ENCODE measurements at regions of chr7 and their contacts with region 1.

Region 1: DNA sequence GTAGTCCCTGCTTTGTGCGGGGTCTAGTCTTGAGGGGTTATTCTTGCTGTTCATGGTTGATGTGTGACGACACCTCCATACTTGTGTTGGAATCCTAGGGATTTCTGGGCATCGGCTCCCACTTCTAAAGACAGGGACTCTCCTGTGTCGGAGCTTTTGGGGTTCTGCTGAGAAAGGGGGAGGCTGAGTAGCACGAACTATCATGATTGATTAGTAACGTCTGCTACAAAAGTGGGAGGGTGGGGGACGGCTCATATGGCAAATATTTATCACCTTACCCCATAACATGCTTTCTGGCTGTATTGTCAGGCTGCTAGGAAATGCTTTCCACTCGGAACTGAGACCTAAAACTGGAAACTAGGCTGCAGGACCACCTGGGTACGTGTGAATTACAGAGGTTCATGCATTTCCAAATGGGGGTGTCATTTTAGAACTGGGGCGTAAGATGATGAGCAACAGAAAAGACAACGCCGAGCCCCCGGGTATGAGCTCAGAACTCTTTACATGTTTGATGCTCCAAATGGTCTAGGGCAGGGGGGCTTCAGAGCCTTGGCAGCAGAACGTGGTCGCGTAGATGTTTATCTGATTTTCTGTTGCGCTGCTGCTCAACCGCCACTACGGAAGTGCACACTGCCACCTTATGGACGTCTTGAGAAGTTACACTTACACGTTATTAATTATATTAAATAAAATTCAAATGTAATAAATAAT is 15.1 kb upstream of the NME8 start:
- DNase-seq: peak; percentile 35 to 73 (median 68)
- H3K4me3 ChIP-seq: peak overlapping the region; percentile 36 to 73 (median 57)
- H3K4me3 Mint-ChIP-seq: peak overlapping the region; percentile 88 to 96
- H3K27ac ChIP-seq: no peak overlapping the region
- H3K27ac Mint-ChIP-seq: peak overlapping the region in 3 of 7 donors; percentile 13 to 52 (median 52)
- H3K4me1 ChIP-seq: peaks cover 15 to 19% of the 10 kb centered on the region in 2 donors
- H3K4me1 Mint-ChIP-seq: peaks cover 19% of the 10 kb centered on the region
- H3K27me3 ChIP-seq: no peaks in the 10 kb centered on the region
- H3K27me3 Mint-ChIP-seq: peaks cover 0 to 3% (median 2%) of the 10 kb centered on the region in 3 donors
- CTCF ChIP-seq: peak; percentile 78

Region 2: GRCh38 chr7:37234928-37235327 is 598.3 kb before region 1 on chr7:
- intact Hi-C with region 1: loop called (anchors 10 kb)
- DNase-seq: peak in 2 of 3 donors; percentile 14 to 19
- H3K4me3 ChIP-seq: no peak overlapping the region
- H3K4me3 Mint-ChIP-seq: no peak overlapping the region
- H3K27ac ChIP-seq: no peak overlapping the region
- H3K27ac Mint-ChIP-seq: peak overlapping the region in 2 of 7 donors; percentile 5 to 7
- H3K4me1 ChIP-seq: no peaks in the 10 kb centered on the region
- H3K4me1 Mint-ChIP-seq: no peaks in the 10 kb centered on the region
- H3K27me3 ChIP-seq: no peaks in the 10 kb centered on the region
- H3K27me3 Mint-ChIP-seq: no peaks in the 10 kb centered on the region
- CTCF ChIP-seq: peak; percentile 64

Region 3: GRCh38 chr7:37633048-37633447 is 200.2 kb before region 1 on chr7:
- intact Hi-C with region 1: loop called (anchors 10 kb)
- DNase-seq: no peak
- H3K4me3 ChIP-seq: no peak overlapping the region
- H3K4me3 Mint-ChIP-seq: no peak overlapping the region
- H3K27ac ChIP-seq: no peak overlapping the region
- H3K27ac Mint-ChIP-seq: no peak overlapping the region
- H3K4me1 ChIP-seq: no peaks in the 10 kb centered on the region
- H3K4me1 Mint-ChIP-seq: peaks cover 3% of the 10 kb centered on the region
- H3K27me3 ChIP-seq: no peaks in the 10 kb centered on the region
- H3K27me3 Mint-ChIP-seq: no peaks in the 10 kb centered on the region
- CTCF ChIP-seq: no peak

Measured in CD14-positive monocyte (primary cell).